ENCODE measurements at regions of chr22 and their contacts with region 1.

Region 1: DNA sequence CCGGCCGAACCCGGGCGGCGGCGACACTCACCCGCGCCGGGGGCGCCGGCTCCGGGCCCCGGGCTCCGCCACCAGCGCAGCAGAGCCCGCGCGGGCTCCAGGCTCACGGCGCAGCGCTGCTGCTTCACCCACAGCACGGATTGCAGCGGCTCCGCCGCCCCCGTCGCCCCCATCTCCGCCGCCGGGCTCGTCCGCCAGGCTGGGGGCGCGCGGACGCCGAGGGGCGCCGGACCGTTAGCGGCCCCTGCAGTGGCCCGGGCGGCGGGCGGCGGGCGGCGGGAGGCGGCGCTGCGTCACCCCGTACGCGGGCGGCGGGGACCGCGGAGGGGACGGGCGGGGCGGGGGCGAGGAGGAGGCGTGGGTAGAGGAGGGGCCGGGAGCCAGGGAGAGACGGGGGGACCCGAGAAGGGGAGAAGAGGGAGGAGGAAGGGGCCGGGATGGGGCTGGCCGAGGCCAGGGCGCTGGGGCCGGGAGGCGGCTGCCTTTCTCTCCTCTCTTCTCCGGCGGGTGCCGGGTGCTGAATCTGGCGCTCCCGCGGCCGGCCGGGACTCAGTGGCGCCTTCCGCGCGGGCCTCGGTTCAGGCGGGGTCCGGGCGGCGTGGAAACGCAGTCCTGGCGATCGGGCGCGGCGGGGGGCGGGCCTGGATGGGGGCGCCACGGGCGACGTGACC is at the start of gene CERK:
- DNase-seq: peak; percentile 68
- H3K4me3 Mint-ChIP-seq: peak within 1 kb of the TSS; percentile 99
- H3K27ac Mint-ChIP-seq: peak within 1 kb of the TSS; percentile 97
- H3K4me1 Mint-ChIP-seq: peaks cover 46% of the 10 kb centered on the region
- H3K27me3 Mint-ChIP-seq: no peaks in the 10 kb centered on the region
- total RNA-seq, gene CERK: 69.6 and 76.5 TPM in 2 replicates

Region 2: DNA sequence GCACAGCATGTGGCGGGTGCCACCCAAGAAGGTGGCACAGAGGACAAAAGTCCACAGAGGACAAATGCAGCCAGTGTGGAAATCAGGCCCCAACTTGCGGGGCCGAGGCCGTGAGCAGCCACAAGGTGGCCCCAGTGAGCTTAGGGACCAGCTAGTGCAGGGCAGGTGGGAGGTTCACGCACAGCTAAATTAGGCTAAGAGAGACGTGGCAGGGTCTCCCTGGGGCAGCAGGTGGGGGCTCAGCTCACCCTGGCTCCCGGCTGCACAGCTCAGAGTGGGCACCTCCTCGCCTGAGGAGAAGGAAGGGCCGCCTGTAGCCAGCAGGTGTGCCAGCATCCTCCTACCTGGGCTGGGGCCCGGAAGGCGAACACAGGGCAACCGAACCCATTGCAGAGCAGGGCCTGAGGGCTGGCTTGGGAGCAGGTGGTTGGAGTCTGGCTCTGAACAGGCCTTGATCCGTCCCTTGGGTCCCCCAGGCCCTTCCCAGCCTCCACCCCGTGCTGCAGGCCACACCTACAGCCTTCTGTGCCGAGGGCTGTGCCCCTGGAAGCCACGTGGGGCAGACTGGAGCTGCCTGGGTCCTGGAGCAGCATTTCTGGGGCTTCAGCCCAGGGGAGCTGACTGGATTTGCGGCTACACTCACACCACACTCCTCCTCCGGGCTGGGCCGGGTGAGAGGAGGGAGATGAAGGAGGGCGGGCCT is 174.6 kb before region 1 on chr22:
- intact Hi-C with region 1: loop called (anchors 2 kb)
- DNase-seq: peak; percentile 68
- H3K4me3 Mint-ChIP-seq: no peak overlapping the region
- H3K27ac Mint-ChIP-seq: no peak overlapping the region
- H3K4me1 Mint-ChIP-seq: peaks cover 8% of the 10 kb centered on the region
- H3K27me3 Mint-ChIP-seq: no peaks in the 10 kb centered on the region

Region 3: DNA sequence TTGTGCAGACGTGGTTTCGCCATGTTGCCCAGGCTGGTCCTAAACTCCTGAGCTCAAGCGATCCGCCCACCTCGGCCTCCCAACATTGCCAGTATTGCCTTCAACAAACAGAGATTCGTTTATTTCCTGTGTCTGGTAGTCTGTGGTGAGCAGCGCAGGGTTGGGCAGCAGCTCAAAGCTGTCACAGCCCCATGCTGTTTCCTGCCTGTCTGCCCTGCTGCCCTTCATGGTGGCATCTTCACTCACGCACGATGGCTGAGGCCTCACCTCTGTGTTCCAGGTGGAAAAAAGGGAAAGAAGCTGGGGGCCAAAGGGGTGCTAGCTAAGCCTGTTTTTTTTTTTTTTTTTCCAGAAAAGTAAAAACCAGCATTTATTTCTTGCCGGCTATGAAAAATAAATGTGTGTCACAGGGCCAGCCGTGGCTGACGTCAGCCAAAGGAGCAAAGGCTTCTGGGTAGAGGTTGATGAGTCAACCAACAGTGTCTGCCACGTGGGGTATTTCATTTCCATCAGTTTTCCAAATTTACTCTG is 53.2 kb after region 1 on chr22:
- intact Hi-C with region 1: loop called (anchors 1 kb)
- DNase-seq: peak; percentile 71
- H3K4me3 Mint-ChIP-seq: peak overlapping the region; percentile 78
- H3K27ac Mint-ChIP-seq: peak overlapping the region; percentile 99
- H3K4me1 Mint-ChIP-seq: peaks cover 49% of the 10 kb centered on the region
- H3K27me3 Mint-ChIP-seq: no peaks in the 10 kb centered on the region

Region 4: GRCh38 chr22:46798366-46799350 is 60.5 kb after region 1 on chr22:
- intact Hi-C with region 1: loop called (anchors 1 kb)
- DNase-seq: peak; percentile 65
- H3K4me3 Mint-ChIP-seq: no peak overlapping the region
- H3K27ac Mint-ChIP-seq: peak overlapping the region; percentile 82
- H3K4me1 Mint-ChIP-seq: peaks cover 21% of the 10 kb centered on the region
- H3K27me3 Mint-ChIP-seq: no peaks in the 10 kb centered on the region

Measured in activated T-helper 1 cell treated with anti-CD3 and anti-CD28 coated beads, Interleukin-12 subunit alpha, Interleukin-12 subunit beta, Interleukin-2, Interleukin-4 antibody, amounts not matched to agents 30 ng/mL and 10 ng/mL and 1 ng/mL, durations not matched to agents 14 hours and 24 hours and 36 hours (primary cell).